MCF 10A (cell line): ENCODE measurements at regions of chr1 and their contacts with region 1.

Region 1: GRCh38 chr1:185681034-185681633 is 53.1 kb upstream of the HMCN1 start:
- DNase-seq: peak; percentile 81
- H3K4me3 Mint-ChIP-seq: no peak overlapping the region
- H3K27ac Mint-ChIP-seq: no peak overlapping the region
- H3K4me1 Mint-ChIP-seq: no peaks in the 10 kb centered on the region
- H3K27me3 Mint-ChIP-seq: no peaks in the 10 kb centered on the region
- CTCF ChIP-seq: peak; percentile 60

Region 2: GRCh38 chr1:185170291-185170848 is 510.8 kb before region 1 on chr1:
- CTCF ChIA-PET with region 1: interaction called, 21 read pairs
- POLR2A ChIA-PET with region 1: no interaction called
- intact Hi-C with region 1: loop called (anchors 1 kb)
- DNase-seq: peak; percentile 84
- H3K4me3 Mint-ChIP-seq: no peak overlapping the region
- H3K27ac Mint-ChIP-seq: no peak overlapping the region
- H3K4me1 Mint-ChIP-seq: no peaks in the 10 kb centered on the region
- H3K27me3 Mint-ChIP-seq: no peaks in the 10 kb centered on the region
- CTCF ChIP-seq: peak; percentile 80

Region 3: DNA sequence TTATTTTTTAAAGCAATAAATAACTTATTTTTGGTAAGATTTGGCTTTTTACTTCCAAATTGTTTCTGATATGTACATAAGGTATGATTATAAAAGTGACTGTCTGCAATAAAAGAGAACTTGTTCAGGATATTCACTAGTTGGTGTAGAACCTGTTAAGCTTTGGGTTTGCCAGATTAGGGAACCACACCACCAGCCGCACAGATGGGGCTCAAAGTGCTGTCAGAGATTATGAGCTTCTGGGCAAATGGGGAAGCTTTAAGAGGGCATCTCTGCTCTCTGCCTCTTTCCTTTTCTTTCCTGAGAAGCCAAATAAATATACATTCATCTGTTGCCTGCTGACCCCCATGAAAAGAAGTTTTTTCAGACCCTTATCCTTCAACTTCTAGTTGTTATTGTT is 389.5 kb before region 1 on chr1:
- CTCF ChIA-PET with region 1: interaction called, 14 read pairs
- POLR2A ChIA-PET with region 1: interaction called, 4 read pairs
- intact Hi-C with region 1: no loop called
- DNase-seq: no peak
- H3K4me3 Mint-ChIP-seq: no peak overlapping the region
- H3K27ac Mint-ChIP-seq: no peak overlapping the region
- H3K4me1 Mint-ChIP-seq: no peaks in the 10 kb centered on the region
- H3K27me3 Mint-ChIP-seq: no peaks in the 10 kb centered on the region
- CTCF ChIP-seq: no peak

Region 4: GRCh38 chr1:185351734-185352466 is 329.2 kb before region 1 on chr1:
- CTCF ChIA-PET with region 1: interaction called, 10 read pairs
- POLR2A ChIA-PET with region 1: no interaction called
- intact Hi-C with region 1: no loop called
- DNase-seq: no peak
- H3K4me3 Mint-ChIP-seq: no peak overlapping the region
- H3K27ac Mint-ChIP-seq: no peak overlapping the region
- H3K4me1 Mint-ChIP-seq: peaks cover 29% of the 10 kb centered on the region
- H3K27me3 Mint-ChIP-seq: no peaks in the 10 kb centered on the region
- CTCF ChIP-seq: no peak

Region 5: DNA sequence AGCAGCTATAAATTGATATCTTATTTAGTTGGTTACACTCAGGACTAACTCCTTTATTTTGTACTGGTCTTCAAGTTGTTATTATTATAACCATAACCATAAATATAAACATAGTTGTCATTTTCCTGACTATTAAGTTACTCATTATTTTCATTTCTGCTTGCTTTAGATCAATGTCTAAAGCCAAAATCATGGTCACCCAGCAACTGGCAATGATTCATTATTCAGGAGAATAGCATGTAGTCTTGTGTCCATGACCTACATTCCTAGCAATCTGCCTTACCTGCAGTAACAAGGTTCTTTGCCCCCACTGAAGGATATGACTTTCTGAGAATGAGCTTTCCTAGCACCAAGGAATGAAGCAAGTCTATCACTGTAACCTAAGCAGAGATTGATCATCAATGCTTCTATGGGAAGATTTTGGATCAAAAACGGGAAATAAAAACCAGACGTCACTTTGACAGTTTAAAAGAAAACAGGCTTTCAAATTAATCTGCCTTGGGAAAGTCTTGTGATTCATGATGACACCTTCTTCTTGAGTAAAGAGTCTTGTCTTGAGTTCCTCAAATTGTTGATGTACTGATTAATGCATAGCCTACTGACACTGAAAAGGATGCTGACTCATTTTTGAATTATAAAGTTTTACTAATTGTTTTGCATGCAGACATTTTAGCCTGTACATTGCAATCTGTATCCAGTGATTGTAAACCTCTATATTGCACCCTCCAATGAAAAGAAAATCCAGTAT is 160.8 kb before region 1 on chr1:
- CTCF ChIA-PET with region 1: no interaction called
- POLR2A ChIA-PET with region 1: no interaction called
- intact Hi-C with region 1: no loop called
- DNase-seq: peak; percentile 30
- H3K4me3 Mint-ChIP-seq: no peak overlapping the region
- H3K27ac Mint-ChIP-seq: peak overlapping the region; percentile 68
- H3K4me1 Mint-ChIP-seq: peaks cover 12% of the 10 kb centered on the region
- H3K27me3 Mint-ChIP-seq: no peaks in the 10 kb centered on the region
- CTCF ChIP-seq: no peak

Region 6: DNA sequence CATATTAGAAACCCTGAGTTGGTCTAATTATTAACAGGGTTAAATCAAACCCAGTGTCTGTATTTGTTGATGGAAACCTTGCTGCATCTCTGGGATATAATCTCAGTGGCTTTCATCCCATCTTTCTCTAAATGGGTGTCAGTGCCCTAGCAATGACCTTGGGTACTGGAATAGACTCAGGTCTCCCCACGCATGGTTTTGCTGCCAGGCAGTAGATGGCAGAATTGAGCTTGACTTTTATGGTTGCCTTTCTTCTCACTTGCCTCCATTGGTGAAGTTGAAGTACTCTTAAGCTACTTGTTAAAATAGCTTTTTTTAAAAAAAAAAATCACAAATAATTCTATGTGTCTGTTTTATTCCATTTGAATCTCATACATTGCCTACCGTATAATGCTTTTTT is 28.8 kb before region 1 on chr1:
- CTCF ChIA-PET with region 1: interaction called, 37 read pairs
- POLR2A ChIA-PET with region 1: interaction called, 3 read pairs
- intact Hi-C with region 1: no loop called
- DNase-seq: peak; percentile 28
- H3K4me3 Mint-ChIP-seq: no peak overlapping the region
- H3K27ac Mint-ChIP-seq: no peak overlapping the region
- H3K4me1 Mint-ChIP-seq: no peaks in the 10 kb centered on the region
- H3K27me3 Mint-ChIP-seq: no peaks in the 10 kb centered on the region
- CTCF ChIP-seq: peak; percentile 9

Region 7: DNA sequence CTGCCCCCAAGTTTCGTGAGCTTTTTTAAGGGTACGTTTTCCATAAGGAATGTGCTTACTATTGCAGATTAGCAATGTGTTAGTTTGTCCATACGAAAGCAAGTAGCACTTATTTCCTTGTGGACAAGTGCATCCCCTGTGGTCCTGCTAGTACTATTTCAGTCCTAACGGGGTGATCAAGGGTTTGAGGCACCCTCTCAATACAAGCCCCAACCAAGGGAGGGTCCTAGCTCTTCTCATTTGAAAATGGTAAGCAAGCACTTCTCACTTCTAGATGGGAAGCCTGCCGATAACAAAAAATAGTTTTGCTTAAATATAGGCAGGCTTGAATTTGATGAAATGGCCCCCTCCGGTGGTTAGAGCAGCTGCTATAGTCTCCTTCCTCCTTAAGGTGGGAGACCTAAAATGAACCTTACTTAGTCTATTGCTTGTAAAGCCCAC is 10.9 kb before region 1 on chr1:
- CTCF ChIA-PET with region 1: interaction called, 72 read pairs
- POLR2A ChIA-PET with region 1: interaction called, 10 read pairs
- intact Hi-C with region 1: no loop called
- DNase-seq: peak; percentile 69
- H3K4me3 Mint-ChIP-seq: no peak overlapping the region
- H3K27ac Mint-ChIP-seq: no peak overlapping the region
- H3K4me1 Mint-ChIP-seq: no peaks in the 10 kb centered on the region
- H3K27me3 Mint-ChIP-seq: no peaks in the 10 kb centered on the region
- CTCF ChIP-seq: peak; percentile 78

Region 8: DNA sequence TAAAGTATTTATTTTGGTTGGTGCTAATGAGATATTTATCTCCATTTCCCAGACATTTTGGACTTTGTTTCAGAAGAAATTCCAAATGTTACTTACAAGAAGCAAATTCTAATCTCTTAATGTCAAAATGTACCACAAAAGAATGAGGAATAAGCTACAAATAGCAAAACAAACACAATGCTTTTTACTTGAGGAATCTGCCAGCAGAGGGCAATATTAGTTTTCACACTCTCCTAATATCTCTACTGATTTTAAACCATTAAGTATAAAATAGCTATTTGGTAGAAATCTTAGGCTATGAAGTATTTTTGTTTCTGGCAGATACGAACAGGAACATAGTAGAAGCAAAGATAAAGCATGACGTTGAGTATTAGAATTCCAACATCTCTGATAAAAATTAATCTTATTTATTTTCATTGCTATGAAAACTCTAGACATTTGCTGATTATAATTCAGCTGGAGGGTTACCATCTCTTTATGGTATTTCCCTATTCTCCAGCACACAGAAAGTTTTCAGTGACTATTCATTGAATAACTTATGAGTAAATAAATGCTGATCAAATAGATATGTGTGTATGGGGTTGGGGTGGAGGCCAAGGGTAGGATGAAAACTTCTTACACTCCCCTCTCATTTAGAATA is 39.6 kb after region 1 on chr1:
- CTCF ChIA-PET with region 1: interaction called, 13 read pairs
- POLR2A ChIA-PET with region 1: no interaction called
- intact Hi-C with region 1: no loop called
- DNase-seq: peak; percentile 65
- H3K4me3 Mint-ChIP-seq: no peak overlapping the region
- H3K27ac Mint-ChIP-seq: no peak overlapping the region
- H3K4me1 Mint-ChIP-seq: peaks cover 22% of the 10 kb centered on the region
- H3K27me3 Mint-ChIP-seq: no peaks in the 10 kb centered on the region
- CTCF ChIP-seq: peak; percentile 63

Region 9: DNA sequence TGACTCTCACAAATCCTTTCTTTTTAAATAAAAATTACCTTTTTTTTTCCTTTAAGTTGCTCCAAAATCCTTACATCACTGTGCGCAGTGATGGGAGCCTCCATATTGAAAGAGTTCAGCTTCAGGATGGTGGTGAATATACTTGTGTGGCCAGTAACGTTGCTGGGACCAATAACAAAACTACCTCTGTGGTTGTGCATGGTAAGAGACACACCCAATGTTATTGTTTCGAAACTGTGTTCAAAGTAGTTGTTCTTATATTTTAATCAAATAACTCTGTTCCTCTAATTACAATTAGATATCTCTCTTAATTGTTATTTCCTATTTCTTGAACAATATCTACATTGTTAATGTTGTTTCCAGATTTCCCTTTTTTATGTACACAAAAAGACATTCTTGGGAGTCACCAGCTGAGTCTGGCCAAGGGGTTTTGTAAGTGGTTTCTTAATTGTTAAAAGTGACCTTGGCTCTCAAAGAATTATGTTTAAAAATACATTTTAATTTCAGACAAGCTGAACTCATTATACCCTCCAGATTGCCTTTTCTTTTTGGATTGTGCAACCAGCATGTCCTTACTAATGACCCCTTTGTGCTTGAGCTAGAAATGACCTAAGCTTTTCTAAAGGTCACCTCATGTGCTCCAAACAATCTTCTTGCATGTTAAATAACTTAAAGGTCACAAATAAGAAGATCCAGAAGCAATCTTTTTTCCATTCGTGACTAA is 303.1 kb after region 1 on chr1:
- CTCF ChIA-PET with region 1: no interaction called
- POLR2A ChIA-PET with region 1: no interaction called
- intact Hi-C with region 1: no loop called
- DNase-seq: no peak
- H3K4me3 Mint-ChIP-seq: no peak overlapping the region
- H3K27ac Mint-ChIP-seq: no peak overlapping the region
- H3K4me1 Mint-ChIP-seq: no peaks in the 10 kb centered on the region
- H3K27me3 Mint-ChIP-seq: no peaks in the 10 kb centered on the region
- CTCF ChIP-seq: no peak